ENCODE measurements at regions of chr12 and their contacts with region 1.

Region 1: GRCh38 chr12:69879041-69879960 is 54.3 kb downstream of the MYRFL start:
- DNase-seq: peak; percentile 55
- H3K4me3 ChIP-seq: peak overlapping the region; percentile 4 to 32 (median 28)
- H3K27ac ChIP-seq: no peak overlapping the region
- H3K4me1 ChIP-seq: peaks cover 6% of the 10 kb centered on the region
- H3K27me3 ChIP-seq: no peaks in the 10 kb centered on the region
- CTCF ChIP-seq: peak; percentile 92 to 96

Region 2: DNA sequence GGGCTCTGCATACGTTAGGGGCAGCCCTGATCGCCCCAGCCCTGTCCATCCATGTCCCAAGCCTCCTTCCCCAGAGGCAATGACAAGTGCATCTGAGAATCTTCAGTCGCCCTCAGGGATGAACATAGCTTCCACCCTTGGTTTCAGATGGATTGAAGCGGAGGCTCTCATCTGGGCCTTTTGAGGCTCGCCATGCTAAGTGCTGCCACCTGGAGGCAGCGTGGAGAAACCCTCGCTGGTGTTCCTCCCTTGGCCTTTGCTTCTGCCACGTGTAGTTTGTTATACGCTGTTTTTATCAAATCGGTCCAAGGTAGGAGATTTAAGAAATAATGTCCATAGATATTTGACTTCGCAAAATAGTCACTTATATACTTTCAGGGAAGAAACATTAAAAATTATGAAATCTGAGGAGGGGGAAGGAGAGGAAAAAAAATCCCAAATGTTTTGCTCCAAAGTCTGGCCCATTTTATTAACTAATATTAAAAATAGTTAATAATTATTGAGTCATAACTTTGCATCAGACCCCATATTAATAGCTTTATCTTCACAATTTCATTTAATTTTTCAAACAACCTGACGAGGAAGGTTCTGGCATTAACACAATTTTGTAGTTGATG is 239.8 kb before region 1 on chr12:
- CTCF ChIA-PET with region 1: no interaction called
- dilution Hi-C with region 1: no loop called
- in situ Hi-C with region 1: no loop called
- intact Hi-C with region 1: loop called (anchors 10 kb)
- DNase-seq: peak; percentile 43
- H3K4me3 ChIP-seq: no peak overlapping the region
- H3K27ac ChIP-seq: no peak overlapping the region
- H3K4me1 ChIP-seq: no peaks in the 10 kb centered on the region
- H3K27me3 ChIP-seq: no peaks in the 10 kb centered on the region
- CTCF ChIP-seq: peak; percentile 85 to 90

Region 3: DNA sequence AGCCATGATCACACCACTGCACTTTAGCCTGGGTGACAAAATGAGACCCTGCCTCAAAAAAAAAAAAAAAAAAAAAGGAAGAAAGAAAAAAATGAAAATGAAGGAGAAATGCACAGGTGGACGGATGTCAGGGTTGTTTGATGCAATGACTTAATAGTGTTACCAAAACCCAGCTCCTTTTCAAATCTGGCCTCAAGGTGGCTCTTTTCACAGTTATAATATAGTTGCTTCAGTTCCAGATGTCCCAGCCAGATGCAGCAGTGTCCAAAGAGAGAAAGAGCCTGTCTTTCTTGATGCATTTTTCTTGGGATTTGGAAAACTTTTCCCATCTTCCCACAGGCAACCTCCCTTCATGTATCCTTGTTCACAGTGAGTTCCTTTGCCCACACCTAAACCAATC is 523.3 kb after region 1 on chr12:
- CTCF ChIA-PET with region 1: interaction called, 22 read pairs
- dilution Hi-C with region 1: no loop called
- in situ Hi-C with region 1: no loop called
- intact Hi-C with region 1: no loop called
- DNase-seq: no peak
- H3K4me3 ChIP-seq: no peak overlapping the region
- H3K27ac ChIP-seq: no peak overlapping the region
- H3K4me1 ChIP-seq: no peaks in the 10 kb centered on the region
- H3K27me3 ChIP-seq: no peaks in the 10 kb centered on the region
- CTCF ChIP-seq: peak in 1 of 2 donors; percentile 21

Region 4: DNA sequence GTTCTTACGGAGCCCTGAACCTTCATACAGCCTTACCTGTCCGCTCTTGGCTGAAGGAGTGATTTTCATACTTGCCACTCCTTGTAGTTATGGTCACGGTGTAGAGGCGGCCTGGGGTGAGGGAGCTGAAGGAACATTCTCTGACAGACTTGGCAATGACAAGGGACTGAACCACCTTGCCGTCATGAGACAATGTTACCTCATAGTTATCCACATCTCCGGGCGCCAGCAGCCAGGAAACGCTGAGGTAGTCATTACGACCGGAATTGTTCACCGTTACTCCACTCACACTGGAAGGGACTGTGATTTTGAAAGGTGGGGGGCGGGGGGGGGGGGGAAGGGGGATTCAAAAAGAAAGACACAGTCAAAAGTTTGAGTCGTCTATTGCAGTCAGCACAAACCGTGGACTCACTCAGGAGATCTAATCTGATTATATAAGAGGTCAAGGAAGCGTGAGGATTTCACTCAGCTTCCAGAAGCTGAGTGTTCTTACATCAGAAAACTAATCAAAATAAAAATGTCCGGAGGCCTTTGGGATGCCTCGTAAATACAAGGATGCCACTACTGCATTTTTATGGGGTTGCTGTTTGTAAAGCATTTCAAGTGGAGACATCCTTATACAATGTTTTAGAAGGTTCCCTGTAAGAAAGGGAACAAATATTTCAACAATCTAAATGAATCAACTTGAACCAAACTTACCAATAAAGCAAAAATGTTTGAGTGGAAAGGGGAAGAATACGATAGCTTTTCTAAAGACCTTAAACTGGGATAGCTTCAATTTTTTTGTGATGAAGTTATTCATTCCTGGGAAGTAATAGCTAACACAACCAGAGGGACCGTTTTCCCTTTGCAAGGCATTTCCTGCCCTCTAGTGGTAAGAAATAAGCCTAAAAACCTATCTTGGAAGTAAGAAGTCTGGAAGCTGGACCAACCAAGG is 697.3 kb after region 1 on chr12:
- CTCF ChIA-PET with region 1: interaction called, 8 read pairs
- dilution Hi-C with region 1: loop called (anchors 25 kb)
- in situ Hi-C with region 1: loop called (anchors 5 to 10 kb)
- intact Hi-C with region 1: loop called (anchors 1 kb)
- DNase-seq: peak; percentile 62
- H3K4me3 ChIP-seq: no peak overlapping the region
- H3K27ac ChIP-seq: no peak overlapping the region
- H3K4me1 ChIP-seq: no peaks in the 10 kb centered on the region
- H3K27me3 ChIP-seq: no peaks in the 10 kb centered on the region
- CTCF ChIP-seq: peak; percentile 67 to 81

Region 5: GRCh38 chr12:70733385-70733784 is 854.1 kb after region 1 on chr12:
- CTCF ChIA-PET with region 1: no interaction called
- dilution Hi-C with region 1: no loop called
- in situ Hi-C with region 1: loop called in 1 of 2 experiments (anchors 25 kb)
- intact Hi-C with region 1: no loop called
- DNase-seq: peak; percentile 60
- H3K4me3 ChIP-seq: no peak overlapping the region
- H3K27ac ChIP-seq: no peak overlapping the region
- H3K4me1 ChIP-seq: no peaks in the 10 kb centered on the region
- H3K27me3 ChIP-seq: no peaks in the 10 kb centered on the region
- CTCF ChIP-seq: peak; percentile 63 to 74